OCI-LY7 (cell line): ENCODE measurements at regions of chr12 and their contacts with region 1.

Region 1: DNA sequence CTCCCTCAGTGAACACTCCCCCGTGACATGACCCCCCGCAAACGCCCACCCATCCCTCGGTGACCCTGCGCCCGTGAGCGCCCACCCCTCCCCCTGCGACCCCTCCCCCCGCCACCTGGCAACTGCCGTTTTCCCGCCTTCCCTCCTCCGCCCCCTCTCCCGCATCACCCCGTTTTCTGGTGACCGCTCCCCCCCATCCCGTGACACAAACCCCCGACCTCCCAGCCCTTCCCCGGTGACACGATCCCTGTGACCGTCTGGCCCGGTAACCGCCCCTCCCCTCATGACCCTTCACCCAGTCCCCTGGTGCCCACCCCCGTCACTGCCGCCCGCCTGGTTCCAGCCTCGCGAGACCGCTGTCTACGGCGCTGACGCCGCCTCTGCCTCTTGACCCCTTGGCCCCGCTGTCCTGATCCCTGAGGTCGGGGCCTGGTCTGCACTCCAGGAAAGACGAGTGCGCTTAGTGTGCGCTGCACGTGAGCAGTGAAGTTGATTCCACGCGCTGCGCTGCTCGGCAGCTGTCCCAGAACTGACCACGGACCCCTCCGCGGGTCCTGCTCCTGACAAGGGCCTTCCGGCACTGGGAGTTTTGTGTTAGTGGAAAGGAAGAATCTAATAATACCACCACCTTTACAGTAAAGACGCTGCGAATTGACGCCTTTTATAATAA is 59.4 kb downstream of the DDX51 start:
- DNase-seq: peak; percentile 47
- H3K4me3 ChIP-seq: peak overlapping the region; percentile 91
- H3K27ac ChIP-seq: peak overlapping the region; percentile 57
- H3K4me1 ChIP-seq: peaks cover 32% of the 10 kb centered on the region
- CTCF ChIP-seq: no peak

Region 2: DNA sequence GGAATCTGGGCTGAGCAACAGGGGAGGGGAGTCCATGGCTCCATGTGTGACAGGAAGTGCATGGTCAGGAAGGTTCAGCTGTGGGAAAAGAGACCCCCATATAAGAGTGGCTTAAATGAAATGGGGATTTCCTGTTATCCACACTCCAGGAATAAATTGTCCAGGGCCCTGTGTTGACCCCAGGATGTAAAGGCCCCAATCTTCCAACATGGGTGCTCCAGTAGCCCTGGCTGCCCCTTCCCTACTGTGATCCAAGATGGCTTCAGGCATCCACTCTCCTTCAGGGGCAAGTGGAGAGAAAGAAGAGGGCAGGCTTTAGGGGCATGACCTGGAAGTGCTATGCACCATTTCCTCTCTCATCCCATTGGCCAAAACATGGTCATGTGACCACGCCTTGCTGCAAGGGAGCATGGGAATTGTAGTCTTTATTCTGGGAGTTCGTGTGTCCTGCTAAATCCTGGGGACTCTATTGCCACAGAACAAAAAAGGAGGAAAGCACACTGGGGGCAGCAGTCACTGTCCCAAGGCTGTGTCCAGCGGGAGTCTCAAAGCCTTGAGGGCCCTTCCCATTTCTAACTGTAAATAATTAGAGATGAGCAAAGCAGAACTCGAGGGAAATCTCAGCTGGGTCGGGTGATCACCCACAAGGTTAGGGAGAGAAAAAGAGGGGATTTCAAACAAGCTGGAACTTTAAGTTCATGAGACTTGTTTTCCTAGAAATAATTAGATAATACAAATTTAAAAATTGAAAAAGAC is 841.8 kb before region 1 on chr12:
- CTCF ChIA-PET with region 1: no interaction called
- POLR2A ChIA-PET with region 1: no interaction called
- intact Hi-C with region 1: no loop called
- DNase-seq: peak; percentile 80
- H3K4me3 ChIP-seq: peak overlapping the region; percentile 47
- H3K27ac ChIP-seq: no peak overlapping the region
- H3K4me1 ChIP-seq: no peaks in the 10 kb centered on the region
- CTCF ChIP-seq: no peak

Region 3: GRCh38 chr12:132040906-132041606 is 43.7 kb before region 1 on chr12:
- CTCF ChIA-PET with region 1: no interaction called
- POLR2A ChIA-PET with region 1: no interaction called
- intact Hi-C with region 1: no loop called
- DNase-seq: no peak
- H3K4me3 ChIP-seq: no peak overlapping the region
- H3K27ac ChIP-seq: no peak overlapping the region
- H3K4me1 ChIP-seq: no peaks in the 10 kb centered on the region
- CTCF ChIP-seq: no peak

Region 4: DNA sequence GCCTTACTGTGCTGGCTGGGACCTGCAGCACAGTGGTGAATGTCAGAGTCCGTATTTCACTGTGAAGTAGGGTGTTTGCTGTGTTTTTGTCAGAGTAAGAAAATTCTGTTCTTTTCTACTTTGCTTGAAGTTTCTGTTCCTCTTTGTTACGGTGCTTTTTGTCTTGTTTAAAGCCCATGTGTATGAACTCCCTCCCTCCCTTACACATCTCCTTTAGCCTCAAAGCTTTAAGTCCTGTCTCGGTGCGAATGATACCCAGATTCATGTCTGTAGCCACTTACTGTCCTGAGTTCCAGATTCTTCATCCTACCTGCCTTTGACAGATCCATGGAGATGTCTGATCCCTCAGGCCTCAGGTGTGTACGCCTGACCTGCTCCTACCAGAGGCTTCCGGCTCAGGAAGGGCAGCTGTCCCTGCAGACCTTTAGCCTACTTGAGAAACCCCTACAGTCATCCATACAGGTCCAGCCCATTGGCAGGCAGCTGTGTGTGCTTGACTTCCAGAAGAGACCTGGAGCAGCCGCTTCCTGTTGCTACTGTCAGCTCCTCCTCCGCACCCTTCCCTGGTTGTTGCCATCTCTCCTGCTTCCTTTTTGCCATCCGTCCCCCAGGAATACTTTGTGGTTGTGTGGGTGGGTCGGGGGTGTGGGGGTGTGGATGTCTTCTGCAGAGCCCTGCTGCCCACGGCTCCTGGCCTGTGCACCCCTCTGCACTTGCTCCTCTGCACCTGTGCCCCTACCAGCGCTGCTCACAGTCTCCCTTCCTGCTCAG is 13.5 kb before region 1 on chr12:
- CTCF ChIA-PET with region 1: no interaction called
- POLR2A ChIA-PET with region 1: interaction called, 4 read pairs
- intact Hi-C with region 1: loop called (anchors 1 kb)
- DNase-seq: peak; percentile 84
- H3K4me3 ChIP-seq: peak overlapping the region; percentile 54
- H3K27ac ChIP-seq: peak overlapping the region; percentile 96
- H3K4me1 ChIP-seq: peaks cover 54% of the 10 kb centered on the region
- CTCF ChIP-seq: no peak

Region 5: DNA sequence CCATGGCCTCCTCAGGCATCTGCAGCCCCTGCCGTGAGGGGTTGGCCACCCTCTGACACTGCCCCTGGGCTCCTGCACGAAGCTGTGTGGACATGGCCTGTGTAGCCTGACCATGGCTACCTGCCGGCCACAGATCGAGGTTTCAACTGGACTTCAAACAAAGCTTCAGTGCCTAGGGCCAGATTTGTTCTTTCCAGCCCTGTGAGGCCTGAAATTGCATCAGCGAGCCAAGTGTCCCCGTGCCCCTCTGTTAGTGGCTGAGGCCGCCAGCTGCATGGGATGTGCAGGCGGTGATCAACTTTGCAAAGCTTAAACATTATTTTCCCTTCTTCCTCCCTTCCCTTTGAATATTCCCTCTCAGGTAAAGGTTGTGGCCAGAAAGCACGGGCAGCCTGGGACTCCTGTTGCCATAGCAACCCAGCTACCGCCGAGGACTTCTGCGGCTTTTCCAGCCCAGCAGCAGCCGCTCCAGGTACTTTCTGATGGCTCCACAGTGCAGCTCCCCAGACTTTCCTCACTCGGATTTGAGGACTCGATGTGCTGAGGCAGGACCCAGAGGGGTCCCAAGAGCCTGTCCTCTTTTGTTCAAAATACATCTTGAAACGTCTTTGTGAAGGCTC is 23.6 kb after region 1 on chr12:
- CTCF ChIA-PET with region 1: no interaction called
- POLR2A ChIA-PET with region 1: no interaction called
- intact Hi-C with region 1: no loop called
- DNase-seq: no peak
- H3K4me3 ChIP-seq: no peak overlapping the region
- H3K27ac ChIP-seq: no peak overlapping the region
- H3K4me1 ChIP-seq: no peaks in the 10 kb centered on the region
- CTCF ChIP-seq: no peak

Region 6: DNA sequence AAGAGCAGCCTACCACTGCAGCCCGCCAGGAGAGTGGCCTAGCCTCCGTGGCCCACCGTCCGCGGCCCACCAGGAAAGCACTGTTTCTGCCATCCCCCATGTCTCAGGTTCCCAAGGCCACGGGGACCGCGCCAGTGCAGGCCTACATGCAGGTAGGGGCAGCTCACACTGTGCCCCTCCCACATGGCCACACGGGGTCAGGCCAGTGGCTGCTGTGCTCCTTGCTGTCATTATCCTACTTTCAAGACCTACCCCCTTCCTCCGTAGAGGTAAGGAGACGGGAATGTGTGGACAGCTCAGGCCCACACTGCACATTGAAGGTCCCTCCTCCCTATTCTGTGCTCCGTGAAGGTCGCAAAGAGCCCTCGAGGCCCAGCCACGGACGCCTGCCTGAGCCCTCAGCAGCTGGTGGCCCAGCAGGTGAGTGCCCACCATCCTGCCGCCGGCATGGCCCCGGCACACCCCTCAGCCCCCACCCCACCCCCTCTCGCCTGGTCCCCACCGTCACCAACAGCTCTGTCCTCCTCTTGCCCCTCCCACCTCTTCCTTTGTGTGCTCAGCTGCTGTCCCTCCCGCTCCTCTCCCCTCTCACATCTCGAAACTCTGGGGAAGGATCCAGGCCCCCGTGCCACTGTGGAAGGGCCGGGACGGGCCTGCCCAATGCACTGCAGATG is 49.3 kb after region 1 on chr12:
- CTCF ChIA-PET with region 1: no interaction called
- POLR2A ChIA-PET with region 1: no interaction called
- intact Hi-C with region 1: no loop called
- DNase-seq: no peak
- H3K4me3 ChIP-seq: no peak overlapping the region
- H3K27ac ChIP-seq: no peak overlapping the region
- H3K4me1 ChIP-seq: no peaks in the 10 kb centered on the region
- CTCF ChIP-seq: no peak

Region 7: DNA sequence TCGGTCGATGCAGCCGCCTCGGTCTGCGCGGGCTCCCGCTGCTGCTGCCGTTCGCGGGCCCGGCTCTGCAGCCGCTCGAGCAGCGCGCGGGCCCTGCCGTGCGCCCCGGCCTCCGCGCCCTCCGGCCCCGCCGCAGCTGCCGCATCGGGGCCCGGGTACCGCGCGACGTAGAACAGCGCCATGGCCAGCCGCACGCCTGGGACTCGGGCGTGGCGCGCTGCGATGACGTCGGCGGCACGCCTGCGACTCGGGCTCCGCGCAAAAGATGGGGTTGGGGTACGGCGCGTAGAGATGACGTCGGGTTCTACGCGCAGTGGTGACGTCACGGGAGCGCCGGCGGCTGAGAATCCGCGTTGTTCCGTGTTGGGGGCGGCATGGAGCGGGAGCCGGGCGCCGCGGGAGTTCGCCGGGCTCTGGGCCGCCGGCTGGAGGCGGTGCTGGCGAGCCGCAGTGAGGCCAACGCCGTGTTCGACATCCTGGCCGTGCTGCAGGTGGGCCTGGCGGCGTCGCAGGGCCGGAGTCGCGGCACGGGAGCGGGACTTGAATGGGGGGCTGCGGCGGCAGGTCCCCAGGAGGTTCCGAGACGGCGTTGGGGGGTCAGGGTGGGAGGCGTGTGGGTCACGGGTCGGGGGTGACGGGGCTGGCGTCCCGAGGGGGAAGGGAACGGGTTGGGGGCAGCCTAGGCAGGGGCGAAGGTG is 59.5 kb after region 1 on chr12 and contains the starts of genes DDX51 and NOC4L:
- CTCF ChIA-PET with region 1: no interaction called
- POLR2A ChIA-PET with region 1: no interaction called
- intact Hi-C with region 1: loop called (anchors 5 kb)
- DNase-seq: peak; percentile 96
- H3K4me3 ChIP-seq: peak within 1 kb of the TSS; percentile 89
- H3K27ac ChIP-seq: peak within 1 kb of the TSS; percentile 49
- H3K4me1 ChIP-seq: peaks cover 19% of the 10 kb centered on the region
- CTCF ChIP-seq: no peak
- total RNA-seq, gene DDX51: 46.2 and 47.1 TPM in 2 replicates
- total RNA-seq, gene NOC4L: 25.0 and 31.0 TPM in 2 replicates